ENCODE measurements at regions of chr6 and their contacts with region 1.

Region 1: GRCh38 chr6:17167327-17167979 is 65.6 kb downstream of the STMND1 start:
- DNase-seq: peak; percentile 15
- ATAC-seq: peak; percentile 61; the same call in 1 of the 2 replicates
- H3K4me3 ChIP-seq: no peak overlapping the region
- H3K27ac ChIP-seq: no peak overlapping the region
- H3K4me1 ChIP-seq: peaks cover 3% of the 10 kb centered on the region; the same call in 1 of the 2 replicates
- H3K27me3 ChIP-seq: no peaks in the 10 kb centered on the region
- CTCF ChIP-seq: peak; percentile 30
- POLR2A ChIP-seq: no peak
- RAD21 ChIP-seq: peak; percentile 14; the same call in 1 of the 2 replicates

Region 2: GRCh38 chr6:17200395-17200794 is 32.9 kb after region 1 on chr6:
- CTCF ChIA-PET with region 1: no interaction called
- POLR2A ChIA-PET with region 1: interaction called, 11 read pairs
- dilution Hi-C with region 1: no loop called
- in situ Hi-C with region 1: no loop called
- intact Hi-C with region 1: no loop called
- DNase-seq: no peak
- ATAC-seq: no peak
- H3K4me3 ChIP-seq: no peak overlapping the region
- H3K27ac ChIP-seq: no peak overlapping the region
- H3K4me1 ChIP-seq: peaks cover 1% of the 10 kb centered on the region; the same call in 1 of the 2 replicates
- H3K27me3 ChIP-seq: no peaks in the 10 kb centered on the region
- CTCF ChIP-seq: no peak
- POLR2A ChIP-seq: no peak
- RAD21 ChIP-seq: no peak

Region 3: GRCh38 chr6:17250237-17250636 is 82.8 kb after region 1 on chr6:
- CTCF ChIA-PET with region 1: no interaction called
- POLR2A ChIA-PET with region 1: no interaction called
- dilution Hi-C with region 1: no loop called
- in situ Hi-C with region 1: no loop called
- intact Hi-C with region 1: loop called (anchors 5 kb)
- DNase-seq: no peak
- ATAC-seq: no peak
- H3K4me3 ChIP-seq: no peak overlapping the region
- H3K27ac ChIP-seq: no peak overlapping the region
- H3K4me1 ChIP-seq: no peaks in the 10 kb centered on the region
- H3K27me3 ChIP-seq: no peaks in the 10 kb centered on the region
- CTCF ChIP-seq: no peak
- POLR2A ChIP-seq: no peak
- RAD21 ChIP-seq: no peak

Region 4: GRCh38 chr6:17417817-17418216 is 250.4 kb after region 1 on chr6:
- CTCF ChIA-PET with region 1: interaction called, 4 read pairs
- POLR2A ChIA-PET with region 1: no interaction called
- dilution Hi-C with region 1: no loop called
- in situ Hi-C with region 1: no loop called
- intact Hi-C with region 1: loop called (anchors 5 kb)
- DNase-seq: peak; percentile 91
- ATAC-seq: peak; percentile 76
- H3K4me3 ChIP-seq: peak overlapping the region; percentile 9; the same call in 1 of the 2 replicates
- H3K27ac ChIP-seq: peak overlapping the region; percentile 86
- H3K4me1 ChIP-seq: peaks cover 21% of the 10 kb centered on the region
- H3K27me3 ChIP-seq: no peaks in the 10 kb centered on the region
- CTCF ChIP-seq: no peak
- POLR2A ChIP-seq: peak; percentile 68; the same call in 1 of the 2 replicates
- RAD21 ChIP-seq: no peak

Region 5: DNA sequence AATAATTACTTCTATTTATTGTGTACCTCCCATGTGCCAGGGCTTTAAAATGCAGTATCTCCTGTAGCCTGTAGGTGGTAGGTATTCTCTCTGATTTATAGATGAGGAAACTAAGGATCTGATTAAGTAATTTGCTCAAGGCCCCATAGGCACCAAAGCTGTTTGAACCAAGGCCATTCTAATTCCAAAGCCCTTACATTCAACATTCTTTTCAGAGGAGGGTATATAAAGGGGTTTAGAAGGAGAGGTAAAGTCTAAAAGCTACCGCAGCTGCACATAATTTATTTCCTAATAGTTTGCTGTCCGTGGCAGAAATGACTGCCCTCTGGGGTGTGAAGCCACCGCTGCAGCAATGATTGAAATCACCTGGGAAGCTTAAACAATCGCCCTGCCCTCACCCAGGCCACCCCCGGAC is 337.6 kb after region 1 on chr6:
- CTCF ChIA-PET with region 1: no interaction called
- POLR2A ChIA-PET with region 1: no interaction called
- dilution Hi-C with region 1: no loop called
- in situ Hi-C with region 1: no loop called
- intact Hi-C with region 1: loop called (anchors 1 kb)
- DNase-seq: peak; percentile 34
- ATAC-seq: peak; percentile 65
- H3K4me3 ChIP-seq: no peak overlapping the region
- H3K27ac ChIP-seq: no peak overlapping the region
- H3K4me1 ChIP-seq: peaks cover 4% of the 10 kb centered on the region; the same call in 1 of the 2 replicates
- H3K27me3 ChIP-seq: no peaks in the 10 kb centered on the region
- CTCF ChIP-seq: peak; percentile 41
- POLR2A ChIP-seq: no peak
- RAD21 ChIP-seq: peak; percentile 20

Measured in IMR-90 (cell line).